GM13977 (cell line): ENCODE measurements at regions of chr2 and their contacts with region 1.

Region 1: DNA sequence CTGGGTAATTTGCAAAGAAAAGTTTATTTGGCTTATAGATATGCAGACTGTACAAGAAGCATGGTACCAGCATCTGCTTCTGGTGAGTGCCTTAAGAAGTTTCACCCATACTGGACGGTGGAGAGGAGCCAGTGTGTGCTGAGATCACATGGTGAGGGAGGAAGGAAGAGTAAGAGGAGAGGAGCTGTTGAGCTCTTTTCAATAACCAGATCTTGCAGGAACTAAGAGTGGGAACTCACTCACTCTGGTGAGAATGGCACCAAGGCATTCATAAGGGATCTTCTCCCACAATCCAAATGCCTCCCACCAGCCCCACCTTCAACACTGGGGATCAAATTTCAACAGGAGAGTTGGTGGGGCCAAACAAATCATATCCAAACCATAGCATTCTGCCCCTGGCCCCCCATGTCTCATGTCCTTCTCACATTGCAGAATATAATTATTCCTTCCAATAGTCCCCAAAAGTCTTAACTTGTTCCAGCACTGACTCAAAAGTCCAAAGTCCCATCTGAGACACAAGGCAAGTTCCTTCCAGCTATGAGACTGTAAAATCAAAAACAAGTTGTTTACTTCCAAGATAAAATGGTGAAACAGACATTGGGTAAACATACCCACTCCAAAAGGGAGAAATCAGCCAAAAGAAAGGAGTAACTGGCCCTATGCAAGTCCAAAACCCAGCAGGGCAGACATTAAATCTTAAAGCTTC is 11.7 kb upstream of the TMEM37 start:
- DNase-seq: no peak
- CTCF ChIP-seq: no peak

Region 2: DNA sequence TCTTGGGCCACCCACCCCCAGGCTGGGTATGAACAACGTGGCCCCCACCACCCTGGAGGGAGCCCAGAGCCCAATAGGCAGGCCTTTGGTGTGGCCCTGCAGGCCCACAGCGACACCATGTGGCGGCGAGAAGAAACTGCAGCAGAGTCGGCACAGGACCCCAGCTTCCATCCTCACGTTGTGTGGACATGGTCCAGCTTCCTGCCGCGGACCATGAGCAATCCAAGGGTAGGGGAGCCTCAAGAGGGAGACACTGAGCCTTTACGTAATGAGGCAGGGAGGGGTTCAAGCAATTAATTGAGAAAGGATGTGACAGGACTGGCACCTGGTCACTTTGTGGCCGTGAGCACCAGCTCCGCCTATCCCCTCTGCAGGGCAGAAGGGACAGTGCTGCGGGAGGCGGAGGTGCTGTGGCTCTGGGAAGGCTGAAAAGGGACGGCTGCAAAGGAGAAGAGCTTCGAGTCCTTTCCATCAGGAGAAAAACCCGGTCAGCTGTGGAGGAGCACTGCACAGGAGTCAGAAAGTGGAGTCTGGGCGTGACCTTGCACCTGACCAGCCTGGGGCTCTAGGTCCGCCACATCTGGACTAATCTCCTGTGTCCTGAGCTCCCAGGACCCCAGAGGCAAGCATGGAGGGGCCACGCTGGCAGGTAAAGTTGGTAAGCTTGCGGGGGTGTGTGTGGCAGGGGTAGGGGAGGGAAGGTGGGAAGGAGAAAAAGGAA is 56.5 kb after region 1 on chr2:
- in situ Hi-C with region 1: loop called (anchors 10 kb)
- DNase-seq: peak; percentile 84
- CTCF ChIP-seq: peak; percentile 97